Transverse colon (tissue), 4 donors: ENCODE measurements at regions of chr10 and their contacts with region 1.

Region 1: DNA sequence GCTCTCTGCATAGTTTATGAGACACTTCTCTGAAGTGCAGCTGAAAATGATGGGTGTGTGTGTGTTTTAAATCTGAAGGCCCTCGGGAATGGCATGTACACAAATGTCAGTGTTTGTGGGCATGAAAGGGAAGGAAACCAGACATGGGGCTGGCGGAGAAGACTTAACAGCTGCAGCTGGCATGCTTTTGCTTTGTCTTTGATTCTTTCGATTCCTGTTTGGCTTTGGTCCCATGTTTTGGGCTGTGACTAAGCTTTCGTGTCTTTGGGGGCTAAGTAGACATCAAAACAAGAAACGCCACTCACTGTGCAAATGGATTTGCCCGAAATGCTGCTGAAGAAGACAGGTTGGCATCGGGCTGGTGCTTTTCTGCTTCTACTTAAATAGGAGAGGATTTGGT is 179.3 kb downstream of the PFKFB3 start:
- DNase-seq: peak; percentile 15
- H3K4me3 ChIP-seq: no peak overlapping the region
- H3K27ac ChIP-seq: peak overlapping the region; percentile 38 to 62 (median 47)
- H3K4me1 ChIP-seq: peaks cover 4 to 20% (median 11%) of the 10 kb centered on the region in 4 donors
- H3K27me3 ChIP-seq: no peaks in the 10 kb centered on the region
- CTCF ChIP-seq: no peak
- EP300 ChIP-seq: no peak
- POLR2A ChIP-seq: no peak

Region 2: GRCh38 chr10:4488904-4489303 is 1893.2 kb before region 1 on chr10:
- in situ Hi-C with region 1: no loop called
- intact Hi-C with region 1: loop called (anchors 10 kb)
- DNase-seq: no peak
- H3K4me3 ChIP-seq: no peak overlapping the region
- H3K27ac ChIP-seq: no peak overlapping the region
- H3K4me1 ChIP-seq: no peaks in the 10 kb centered on the region
- H3K27me3 ChIP-seq: no peaks in the 10 kb centered on the region
- CTCF ChIP-seq: no peak
- EP300 ChIP-seq: no peak
- POLR2A ChIP-seq: no peak

Region 3: GRCh38 chr10:6108603-6109443 is 273.3 kb before region 1 on chr10:
- in situ Hi-C with region 1: loop called in 1 of 4 experiments (anchors 25 kb)
- intact Hi-C with region 1: no loop called
- DNase-seq: no peak
- H3K4me3 ChIP-seq: no peak overlapping the region
- H3K27ac ChIP-seq: no peak overlapping the region
- H3K4me1 ChIP-seq: peaks cover 0 to 6% (median 0%) of the 10 kb centered on the region in 4 donors
- H3K27me3 ChIP-seq: no peaks in the 10 kb centered on the region
- CTCF ChIP-seq: peak; percentile 72 to 81 (median 73)
- EP300 ChIP-seq: no peak
- POLR2A ChIP-seq: no peak

Region 4: GRCh38 chr10:6239213-6239991 is 142.7 kb before region 1 on chr10:
- in situ Hi-C with region 1: loop called in 1 of 4 experiments (anchors 25 kb)
- intact Hi-C with region 1: no loop called
- DNase-seq: peak; percentile 42
- H3K4me3 ChIP-seq: no peak overlapping the region
- H3K27ac ChIP-seq: peak overlapping the region in 2 of 4 donors; percentile 2 to 41
- H3K4me1 ChIP-seq: no peaks in the 10 kb centered on the region
- H3K27me3 ChIP-seq: no peaks in the 10 kb centered on the region
- CTCF ChIP-seq: no peak
- EP300 ChIP-seq: no peak
- POLR2A ChIP-seq: no peak